ENCODE measurements at regions of chr1 and their contacts with region 1.

Region 1: GRCh38 chr1:207321079-207321789 is at the start of gene CD55:
- DNase-seq: peak; percentile 96 to 97 (median 96)
- ATAC-seq: peak; percentile 97 to 99 (median 98)
- H3K4me3 ChIP-seq: peak within 1 kb of the TSS; percentile 45 to 97 (median 87)
- H3K27ac ChIP-seq: peak within 1 kb of the TSS; percentile 89 to 98 (median 95)
- H3K4me1 ChIP-seq: peaks cover 0 to 64% (median 12%) of the 10 kb centered on the region in 12 donors
- H3K27me3 ChIP-seq: no peaks in the 10 kb centered on the region
- CTCF ChIP-seq: peak in 11 of 12 donors; percentile 4 to 45 (median 23)
- POLR2A ChIP-seq: peak; percentile 16 to 90
- total RNA-seq, gene CD55: 68.8 to 149 (median 91.2) TPM

Region 2: GRCh38 chr1:206967096-206967849 is 354.0 kb before region 1 on chr1:
- intact Hi-C with region 1: no loop called
- DNase-seq: no peak
- ATAC-seq: peak in 2 of 4 donors; percentile 37 to 44
- H3K4me3 ChIP-seq: no peak overlapping the region
- H3K27ac ChIP-seq: peak overlapping the region in 1 of 12 donors; percentile 15
- H3K4me1 ChIP-seq: peaks cover 0 to 55% (median 0%) of the 10 kb centered on the region in 12 donors
- H3K27me3 ChIP-seq: peaks cover 0 to 24% (median 0%) of the 10 kb centered on the region in 9 donors
- CTCF ChIP-seq: no peak
- POLR2A ChIP-seq: no peak

Region 3: GRCh38 chr1:207084701-207085180 is 236.5 kb before region 1 on chr1:
- intact Hi-C with region 1: loop called in 2 of 10 experiments (anchors 5 to 10 kb)
- DNase-seq: peak in 3 of 5 donors; percentile 37 to 42 (median 38)
- ATAC-seq: peak in 3 of 4 donors; percentile 69 to 76 (median 72)
- H3K4me3 ChIP-seq: no peak overlapping the region
- H3K27ac ChIP-seq: no peak overlapping the region
- H3K4me1 ChIP-seq: peaks cover 0 to 13% (median 0%) of the 10 kb centered on the region in 12 donors
- H3K27me3 ChIP-seq: no peaks in the 10 kb centered on the region
- CTCF ChIP-seq: peak; percentile 41 to 72 (median 62)
- POLR2A ChIP-seq: no peak

Region 4: GRCh38 chr1:207205614-207206061 is 115.6 kb before region 1 on chr1:
- intact Hi-C with region 1: loop called in 1 of 10 experiments (anchors 10 kb)
- DNase-seq: no peak
- ATAC-seq: peak in 2 of 4 donors; percentile 51 to 60
- H3K4me3 ChIP-seq: no peak overlapping the region
- H3K27ac ChIP-seq: peak overlapping the region in 11 of 12 donors; percentile 29 to 85 (median 60)
- H3K4me1 ChIP-seq: peaks cover 0 to 19% (median 0%) of the 10 kb centered on the region in 12 donors
- H3K27me3 ChIP-seq: no peaks in the 10 kb centered on the region
- CTCF ChIP-seq: no peak
- POLR2A ChIP-seq: no peak

Region 5: GRCh38 chr1:207345644-207346561 is 24.7 kb after region 1 on chr1:
- intact Hi-C with region 1: loop called in 1 of 10 experiments (anchors 2 kb)
- DNase-seq: no peak
- ATAC-seq: peak in 2 of 4 donors; percentile 38 to 58
- H3K4me3 ChIP-seq: no peak overlapping the region
- H3K27ac ChIP-seq: peak overlapping the region in 2 of 12 donors; percentile 0 to 9
- H3K4me1 ChIP-seq: peaks cover 0 to 31% (median 10%) of the 10 kb centered on the region in 12 donors
- H3K27me3 ChIP-seq: no peaks in the 10 kb centered on the region
- CTCF ChIP-seq: no peak
- POLR2A ChIP-seq: no peak

Region 6: DNA sequence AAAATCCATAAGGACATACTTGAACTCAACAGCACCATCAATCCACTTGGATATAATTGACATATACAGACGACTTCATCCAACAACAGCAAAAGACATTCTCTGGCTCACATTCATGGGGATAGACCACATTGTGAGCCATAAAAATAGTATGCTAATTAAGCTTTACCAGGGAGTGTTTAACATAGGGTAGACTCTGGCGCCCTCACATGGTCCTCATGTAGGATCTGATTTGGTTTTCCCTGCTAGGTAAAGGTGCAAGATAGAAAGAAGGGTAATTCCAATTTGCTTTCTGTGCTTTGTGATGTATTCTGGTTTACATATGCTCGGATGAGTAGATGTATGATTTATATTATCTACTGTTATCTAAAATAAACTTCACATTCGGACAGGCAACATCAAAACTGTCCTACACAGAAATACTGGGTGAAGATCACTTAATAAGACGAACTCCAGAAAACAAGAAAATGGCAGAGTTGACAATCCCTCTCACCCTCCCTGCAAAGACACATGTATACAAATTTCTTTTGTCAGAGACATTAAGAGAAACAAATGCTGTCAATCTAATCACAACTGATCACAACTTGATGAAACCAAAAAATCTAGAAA is 351.4 kb after region 1 on chr1:
- intact Hi-C with region 1: no loop called
- DNase-seq: no peak
- ATAC-seq: no peak
- H3K4me3 ChIP-seq: no peak overlapping the region
- H3K27ac ChIP-seq: no peak overlapping the region
- H3K4me1 ChIP-seq: peaks cover 0 to 8% (median 0%) of the 10 kb centered on the region in 12 donors
- H3K27me3 ChIP-seq: peaks cover 0 to 54% (median 26%) of the 10 kb centered on the region in 9 donors
- CTCF ChIP-seq: peak in 2 of 12 donors; percentile 19 to 32
- POLR2A ChIP-seq: no peak

Measured in heart left ventricle (tissue), 16 donors.